Activated naive CD4-positive, alpha-beta T cell treated with anti-CD3 and anti-CD28 coated beads for 36 hours (primary cell): ENCODE measurements at regions of chr6 and their contacts with region 1.

Region 1: GRCh38 chr6:44221291-44221960 is 2.0 kb upstream of the SLC29A1 start:
- DNase-seq: peak; percentile 86
- H3K4me3 Mint-ChIP-seq: no peak overlapping the region
- H3K27ac Mint-ChIP-seq: peak overlapping the region; percentile 21
- H3K4me1 Mint-ChIP-seq: peaks cover 49% of the 10 kb centered on the region
- H3K27me3 Mint-ChIP-seq: peaks cover 2% of the 10 kb centered on the region

Region 2: DNA sequence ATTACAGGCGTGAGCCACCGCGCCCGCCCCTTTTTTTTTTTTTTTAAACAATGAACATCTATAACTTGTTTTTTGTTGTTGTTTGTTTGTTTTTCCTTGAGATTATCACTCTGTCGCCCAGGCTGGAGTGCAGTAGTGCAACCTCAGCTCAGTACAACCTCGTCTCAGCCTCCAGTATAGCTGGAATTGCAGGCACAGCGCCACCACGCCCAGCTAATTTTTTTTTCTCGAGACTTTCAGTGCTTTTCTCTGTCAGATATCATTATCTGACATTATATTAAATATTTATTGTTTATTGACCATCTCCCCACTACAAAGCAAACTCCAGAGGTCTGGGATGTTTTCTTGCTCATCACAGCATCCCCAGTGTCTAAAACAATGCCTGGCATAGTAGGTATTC is 763.8 kb before region 1 on chr6:
- CTCF ChIA-PET with region 1: no interaction called
- intact Hi-C with region 1: no loop called
- DNase-seq: no peak
- H3K4me3 Mint-ChIP-seq: no peak overlapping the region
- H3K27ac Mint-ChIP-seq: no peak overlapping the region
- H3K4me1 Mint-ChIP-seq: peaks cover 8% of the 10 kb centered on the region
- H3K27me3 Mint-ChIP-seq: peaks cover 11% of the 10 kb centered on the region

Region 3: DNA sequence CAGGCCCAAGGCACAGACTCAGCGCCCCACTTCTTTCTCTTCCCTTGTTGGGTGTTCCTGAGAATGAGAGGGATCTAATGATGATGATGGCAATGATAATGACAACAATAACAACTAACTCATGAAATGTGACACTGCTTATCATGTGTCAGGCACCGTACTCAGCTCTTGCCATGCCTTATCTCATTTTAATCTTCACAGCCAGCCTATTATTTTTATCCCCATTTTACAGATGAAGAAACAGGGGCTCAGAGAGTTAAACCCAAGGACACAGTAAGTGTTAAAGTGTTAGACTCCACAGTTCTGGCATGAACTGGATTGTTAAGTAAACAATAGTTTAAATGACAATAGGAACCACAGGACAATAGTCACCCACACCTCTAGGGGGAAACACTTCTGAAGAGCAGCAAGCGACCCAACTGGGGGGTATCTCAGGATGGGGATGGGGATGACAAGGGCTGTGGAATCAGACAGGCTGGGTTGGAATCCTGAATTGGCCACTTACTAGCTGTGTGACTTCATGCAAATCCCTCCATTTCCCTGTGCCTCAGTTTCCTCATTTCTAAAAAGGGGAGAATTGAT is 564.1 kb before region 1 on chr6:
- CTCF ChIA-PET with region 1: no interaction called
- intact Hi-C with region 1: no loop called
- DNase-seq: no peak
- H3K4me3 Mint-ChIP-seq: no peak overlapping the region
- H3K27ac Mint-ChIP-seq: no peak overlapping the region
- H3K4me1 Mint-ChIP-seq: no peaks in the 10 kb centered on the region
- H3K27me3 Mint-ChIP-seq: no peaks in the 10 kb centered on the region

Region 4: DNA sequence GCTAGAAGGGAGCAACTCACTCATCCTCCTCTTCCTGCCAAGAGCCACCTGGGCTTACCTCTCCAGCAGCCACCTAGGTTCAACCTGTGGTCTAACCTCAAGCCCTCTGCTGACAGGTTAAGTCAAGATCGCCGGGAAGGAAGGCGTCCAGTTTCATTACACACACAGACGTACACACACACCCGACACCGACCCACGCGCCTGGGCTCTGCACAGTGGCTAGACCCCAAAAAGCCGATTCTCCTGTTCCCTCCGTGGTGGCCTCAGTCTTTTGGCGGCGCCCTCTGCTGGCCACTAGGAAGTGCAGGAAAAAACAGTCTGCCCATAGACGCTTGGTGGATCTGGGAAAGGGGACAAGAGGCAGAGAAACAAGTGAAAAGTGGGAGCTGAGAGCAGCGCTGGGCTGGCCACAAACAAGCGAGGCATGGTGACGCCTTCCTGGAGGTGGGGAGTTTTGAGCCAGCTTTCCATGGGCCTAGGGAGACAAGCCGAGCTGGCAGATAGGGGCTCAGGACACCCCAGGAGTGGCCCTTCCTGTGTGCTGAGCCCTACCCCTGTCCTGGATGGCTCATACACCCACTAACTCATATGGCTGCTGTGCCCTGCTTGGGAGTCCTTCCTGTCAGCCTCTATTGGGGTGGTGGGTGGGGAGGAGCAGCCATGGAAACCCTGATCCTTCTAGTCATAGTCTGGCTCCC is 146.8 kb before region 1 on chr6:
- CTCF ChIA-PET with region 1: no interaction called
- intact Hi-C with region 1: no loop called
- DNase-seq: peak; percentile 73
- H3K4me3 Mint-ChIP-seq: peak overlapping the region; percentile 73
- H3K27ac Mint-ChIP-seq: no peak overlapping the region
- H3K4me1 Mint-ChIP-seq: peaks cover 19% of the 10 kb centered on the region
- H3K27me3 Mint-ChIP-seq: peaks cover 3% of the 10 kb centered on the region

Region 5: GRCh38 chr6:44172731-44173500 is 48.5 kb before region 1 on chr6:
- CTCF ChIA-PET with region 1: interaction called, 10 read pairs
- intact Hi-C with region 1: loop called (anchors 5 kb)
- DNase-seq: peak; percentile 89
- H3K4me3 Mint-ChIP-seq: no peak overlapping the region
- H3K27ac Mint-ChIP-seq: no peak overlapping the region
- H3K4me1 Mint-ChIP-seq: peaks cover 4% of the 10 kb centered on the region
- H3K27me3 Mint-ChIP-seq: peaks cover 6% of the 10 kb centered on the region

Region 6: DNA sequence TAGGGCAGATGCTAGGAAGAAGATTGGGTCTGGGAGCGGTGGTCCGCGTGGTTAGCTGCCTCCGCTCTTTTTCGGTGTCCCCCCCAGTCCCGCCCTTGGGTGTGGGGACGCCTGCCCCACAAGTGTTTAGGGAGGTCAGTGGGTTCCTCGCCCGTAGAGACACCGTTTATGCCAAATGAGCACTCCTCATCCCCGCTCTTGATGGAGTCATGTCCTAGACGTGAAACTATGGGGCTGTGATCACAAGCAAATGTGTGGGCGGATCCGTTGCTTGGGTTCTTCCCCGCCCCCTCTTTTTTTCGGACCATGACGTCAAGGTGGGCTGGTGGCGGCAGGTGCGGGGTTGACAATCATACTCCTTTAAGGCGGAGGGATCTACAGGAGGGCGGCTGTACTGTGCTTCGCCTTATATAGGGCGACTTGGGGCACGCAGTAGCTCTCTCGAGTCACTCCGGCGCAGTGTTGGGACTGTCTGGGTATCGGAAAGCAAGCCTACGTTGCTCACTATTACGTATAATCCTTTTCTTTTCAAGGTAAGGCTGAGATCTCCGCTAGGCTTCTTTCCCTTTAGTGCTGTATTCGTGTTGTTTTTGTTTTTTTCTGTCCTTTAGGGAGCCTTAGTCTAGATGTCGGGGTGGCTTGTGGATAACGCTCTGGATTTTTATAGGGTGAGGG is 25.4 kb after region 1 on chr6 and contains the start of gene HSP90AB1:
- CTCF ChIA-PET with region 1: interaction called, 9 read pairs
- intact Hi-C with region 1: loop called (anchors 1 kb)
- DNase-seq: peak; percentile 99
- H3K4me3 Mint-ChIP-seq: peak within 1 kb of the TSS; percentile 95
- H3K27ac Mint-ChIP-seq: peak within 1 kb of the TSS; percentile 97
- H3K4me1 Mint-ChIP-seq: peaks cover 46% of the 10 kb centered on the region
- H3K27me3 Mint-ChIP-seq: peaks cover 4% of the 10 kb centered on the region
- total RNA-seq, gene HSP90AB1: 1,951 to 2,044 TPM

Region 7: DNA sequence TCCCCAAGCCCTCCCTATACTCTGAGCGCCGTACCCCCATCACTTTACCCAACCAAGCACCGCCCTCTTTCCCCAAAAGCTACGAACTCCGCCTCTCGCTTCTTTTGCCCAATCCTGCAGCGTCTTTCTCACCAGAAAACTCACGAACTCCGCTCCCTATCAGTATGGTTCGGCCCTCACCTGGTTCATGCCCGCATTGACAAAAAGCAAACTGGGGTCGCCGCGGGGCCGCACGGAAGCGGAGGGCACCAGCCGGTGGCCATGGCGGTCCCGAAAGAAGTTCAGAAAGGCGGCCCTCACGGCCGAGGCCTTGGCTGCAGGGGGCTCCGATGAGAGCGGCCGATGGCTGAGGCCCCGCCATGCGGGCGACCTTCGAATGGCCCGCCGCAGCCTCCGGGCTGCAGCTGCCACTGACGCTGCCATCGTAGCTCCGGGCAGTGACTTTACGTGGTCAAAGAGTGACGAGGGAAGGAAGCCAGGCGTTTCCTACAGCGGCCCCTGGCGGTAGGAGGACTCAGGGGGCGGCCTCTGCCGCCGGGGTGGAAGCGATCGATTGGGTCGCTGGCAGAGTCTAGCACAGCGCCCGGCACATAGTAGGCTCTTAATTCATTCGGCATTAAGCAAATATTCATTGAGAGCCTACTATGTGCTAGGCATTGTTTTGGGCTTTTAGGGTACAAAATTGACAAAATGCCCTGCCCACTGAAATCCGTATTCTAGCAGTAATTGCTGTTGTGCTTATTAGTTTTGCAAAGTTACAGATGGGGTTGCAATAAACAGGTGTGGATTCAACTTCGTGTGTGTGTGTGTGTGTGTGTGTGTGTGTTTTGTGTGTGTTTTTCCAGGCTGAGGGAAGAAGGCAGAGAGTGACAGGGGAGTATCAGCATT is 91.7 kb after region 1 on chr6 and contains the start of gene AARS2:
- CTCF ChIA-PET with region 1: interaction called, 4 read pairs
- intact Hi-C with region 1: loop called (anchors 5 kb)
- DNase-seq: peak; percentile 95
- H3K4me3 Mint-ChIP-seq: peak within 1 kb of the TSS; percentile 96
- H3K27ac Mint-ChIP-seq: peak within 1 kb of the TSS; percentile 79
- H3K4me1 Mint-ChIP-seq: peaks cover 17% of the 10 kb centered on the region
- H3K27me3 Mint-ChIP-seq: no peaks in the 10 kb centered on the region
- total RNA-seq, gene AARS2: 11.6 to 12.9 TPM

Region 8: DNA sequence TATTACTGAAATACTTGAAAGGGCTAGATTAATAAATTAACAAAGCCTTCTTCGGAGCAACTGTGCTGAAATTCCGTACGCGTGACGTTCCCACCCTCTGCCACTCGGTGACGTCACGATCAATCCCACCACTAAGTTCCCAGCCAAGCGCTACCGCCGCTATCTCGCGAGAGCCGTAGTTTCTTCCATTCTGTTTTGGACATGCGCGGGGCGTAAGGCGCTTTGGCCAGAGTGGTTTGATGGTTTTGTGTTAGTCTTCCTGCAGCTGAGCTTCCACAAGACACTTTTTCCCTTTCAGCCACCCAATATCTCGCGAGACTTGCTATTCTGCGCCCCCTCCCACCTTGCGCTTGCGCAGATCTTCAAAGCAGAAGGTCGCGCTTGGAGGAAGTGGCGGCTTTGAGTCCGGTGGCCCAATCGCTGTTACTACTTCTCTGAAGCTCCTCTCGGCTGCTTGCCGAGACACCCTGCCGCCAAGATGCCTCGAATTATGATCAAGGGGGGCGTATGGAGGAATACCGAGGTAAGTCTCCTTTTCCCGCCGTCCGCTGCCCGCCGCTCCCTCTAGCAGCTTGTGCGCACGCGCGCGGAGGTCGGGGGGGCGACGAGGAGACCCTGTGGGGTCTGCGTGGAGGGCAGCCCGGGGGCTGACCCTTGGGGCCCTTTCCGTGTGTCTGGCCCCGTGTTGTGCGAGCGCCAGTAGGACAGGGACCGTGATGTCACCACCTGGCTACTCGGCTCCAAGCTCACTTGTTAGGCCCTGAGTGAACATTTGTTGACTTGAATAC is 166.1 kb after region 1 on chr6 and contains the start of gene CDC5L:
- CTCF ChIA-PET with region 1: no interaction called
- intact Hi-C with region 1: loop called (anchors 2 kb)
- DNase-seq: peak; percentile 96
- H3K4me3 Mint-ChIP-seq: peak within 1 kb of the TSS; percentile 93
- H3K27ac Mint-ChIP-seq: peak within 1 kb of the TSS; percentile 96
- H3K4me1 Mint-ChIP-seq: peaks cover 34% of the 10 kb centered on the region
- H3K27me3 Mint-ChIP-seq: no peaks in the 10 kb centered on the region
- total RNA-seq, gene CDC5L: 17.9 to 18.8 TPM